ENCODE measurements at regions of chr3 and their contacts with region 1.

Region 1: DNA sequence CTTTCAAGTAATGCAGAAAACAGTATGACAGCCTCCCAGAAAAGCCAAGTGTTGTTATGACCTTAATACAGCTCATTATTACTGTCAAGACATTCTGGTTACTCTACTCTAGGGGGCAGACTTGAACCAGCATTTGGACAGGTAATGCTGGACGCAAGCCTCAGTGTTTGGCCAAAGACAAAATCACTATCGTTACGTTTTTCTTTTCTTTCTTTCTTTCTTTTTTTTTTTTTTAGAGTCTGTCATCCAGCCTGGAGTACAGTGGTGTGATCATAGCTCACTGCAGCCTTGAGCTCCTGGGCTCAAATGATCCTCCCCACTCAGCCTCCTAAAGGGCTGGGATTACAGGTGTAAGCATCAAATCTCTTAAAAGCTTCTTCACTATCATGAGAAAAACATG is 29.4 kb upstream of the TMEM45A start:
- DNase-seq: no peak
- H3K4me3 Mint-ChIP-seq: no peak overlapping the region
- H3K27ac Mint-ChIP-seq: no peak overlapping the region
- H3K4me1 Mint-ChIP-seq: peaks cover 7% of the 10 kb centered on the region
- H3K27me3 Mint-ChIP-seq: peaks cover 2% of the 10 kb centered on the region

Region 2: DNA sequence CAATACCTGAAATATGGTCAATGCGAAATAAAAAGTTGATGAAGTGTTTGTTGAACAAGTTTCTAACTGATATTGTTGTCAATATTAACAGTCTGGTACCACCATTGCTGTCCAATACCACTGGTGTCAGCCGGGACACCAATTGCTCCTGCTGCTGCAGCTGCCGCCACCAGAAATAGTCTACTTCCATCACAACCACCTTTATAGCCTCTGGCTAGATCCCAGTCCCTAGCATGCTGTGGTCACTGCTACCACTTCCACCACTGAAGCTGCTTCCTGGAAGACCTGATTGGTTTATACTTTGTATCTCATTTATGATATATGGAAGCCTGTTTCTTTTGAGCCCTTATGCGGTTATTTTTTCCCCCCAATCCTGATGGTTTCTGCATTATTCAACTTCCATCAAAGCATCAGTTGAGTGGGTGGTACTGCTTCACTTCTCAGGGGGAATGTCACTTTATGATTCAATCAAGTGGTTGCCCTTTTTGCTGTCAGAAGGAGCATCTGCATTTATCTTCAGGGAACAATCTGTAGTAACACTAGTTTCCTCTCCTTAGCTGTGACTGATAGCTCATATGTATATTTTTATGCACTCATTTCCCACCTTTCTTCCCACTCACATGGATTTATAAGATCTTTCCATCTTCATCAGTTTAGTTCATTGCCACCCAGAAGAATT is 50.0 kb before region 1 on chr3:
- intact Hi-C with region 1: no loop called
- DNase-seq: no peak
- H3K4me3 Mint-ChIP-seq: no peak overlapping the region
- H3K27ac Mint-ChIP-seq: no peak overlapping the region
- H3K4me1 Mint-ChIP-seq: peaks cover 5% of the 10 kb centered on the region
- H3K27me3 Mint-ChIP-seq: peaks cover 1% of the 10 kb centered on the region

Region 3: GRCh38 chr3:100590114-100590839 is 127.3 kb after region 1 on chr3:
- intact Hi-C with region 1: loop called (anchors 1 kb)
- DNase-seq: peak; percentile 54
- H3K4me3 Mint-ChIP-seq: peak overlapping the region; percentile 1
- H3K27ac Mint-ChIP-seq: no peak overlapping the region
- H3K4me1 Mint-ChIP-seq: peaks cover 6% of the 10 kb centered on the region
- H3K27me3 Mint-ChIP-seq: peaks cover 7% of the 10 kb centered on the region

Region 4: GRCh38 chr3:100634493-100635272 is 171.7 kb after region 1 on chr3:
- intact Hi-C with region 1: loop called (anchors 5 kb)
- DNase-seq: peak; percentile 21
- H3K4me3 Mint-ChIP-seq: no peak overlapping the region
- H3K27ac Mint-ChIP-seq: no peak overlapping the region
- H3K4me1 Mint-ChIP-seq: peaks cover 14% of the 10 kb centered on the region
- H3K27me3 Mint-ChIP-seq: peaks cover 15% of the 10 kb centered on the region

Region 5: DNA sequence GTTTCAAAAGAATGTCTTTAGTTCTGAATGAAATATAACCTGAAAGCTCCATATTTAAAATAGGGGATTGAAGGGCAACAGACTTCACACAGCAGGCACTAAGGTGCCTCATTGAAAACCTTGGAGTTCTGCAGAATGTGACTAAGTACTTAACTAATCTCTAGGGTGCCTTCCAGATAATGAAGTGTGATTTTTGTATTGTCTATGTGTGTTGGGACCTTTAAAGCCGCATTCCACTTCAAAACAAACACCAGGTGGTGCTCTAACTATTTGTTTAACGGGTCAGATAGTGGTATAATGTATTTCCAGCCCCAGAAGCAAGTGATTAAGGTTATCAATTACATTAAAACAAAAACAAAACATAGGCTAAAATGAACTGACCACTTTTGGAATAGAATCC is 274.3 kb after region 1 on chr3:
- intact Hi-C with region 1: loop called (anchors 10 kb)
- DNase-seq: no peak
- H3K4me3 Mint-ChIP-seq: no peak overlapping the region
- H3K27ac Mint-ChIP-seq: peak overlapping the region; percentile 33
- H3K4me1 Mint-ChIP-seq: peaks cover 41% of the 10 kb centered on the region
- H3K27me3 Mint-ChIP-seq: no peaks in the 10 kb centered on the region